Transverse colon (tissue), 4 donors: ENCODE measurements at regions of chr16 and their contacts with region 1.

Region 1: GRCh38 chr16:73166441-73166851 is 118.5 kb upstream of the ZFHX3 start:
- DNase-seq: no peak
- H3K4me3 ChIP-seq: peak overlapping the region in 1 of 4 donors; percentile 15
- H3K27ac ChIP-seq: peak overlapping the region; percentile 24 to 59 (median 43)
- H3K4me1 ChIP-seq: peaks cover 0 to 18% (median 10%) of the 10 kb centered on the region in 4 donors
- H3K27me3 ChIP-seq: no peaks in the 10 kb centered on the region
- CTCF ChIP-seq: no peak
- EP300 ChIP-seq: no peak
- POLR2A ChIP-seq: no peak

Region 2: DNA sequence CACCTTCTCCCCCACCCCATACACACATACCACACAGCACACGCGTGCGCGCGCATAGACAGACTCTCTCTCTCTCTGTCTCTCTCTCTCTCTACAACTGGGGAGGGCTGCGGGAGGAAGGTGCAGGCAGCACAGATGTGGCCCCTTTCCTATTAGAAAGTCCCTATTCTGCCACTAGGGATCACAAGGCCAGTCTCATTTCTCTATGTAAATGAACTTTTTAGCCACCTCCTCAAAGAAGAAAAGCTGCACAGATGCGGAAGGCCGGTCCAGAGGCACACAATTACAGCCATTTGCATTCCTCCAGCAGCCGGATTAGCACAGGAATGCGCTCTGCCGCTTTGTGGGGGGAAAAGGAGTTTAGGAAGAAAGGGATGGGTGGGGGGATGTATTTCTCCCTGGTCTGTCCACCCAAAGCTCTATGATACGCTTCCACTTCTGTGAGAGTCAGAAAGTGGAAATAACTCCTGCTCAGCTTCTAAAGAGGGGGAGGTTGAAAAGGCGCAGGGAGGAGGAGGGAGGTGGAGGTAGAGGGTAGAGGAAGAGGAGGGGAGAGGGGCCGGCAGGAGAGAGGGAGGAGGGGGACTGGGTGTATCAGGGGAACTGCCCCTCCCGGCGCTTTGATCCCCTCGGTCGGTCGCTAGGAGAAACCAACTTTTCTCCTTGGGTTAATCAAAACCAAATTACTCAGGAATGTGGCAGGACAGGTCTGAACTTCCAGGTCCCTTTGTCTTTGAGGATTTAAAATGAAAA is 130.2 kb before region 1 on chr16:
- in situ Hi-C with region 1: no loop called
- intact Hi-C with region 1: no loop called
- DNase-seq: no peak
- H3K4me3 ChIP-seq: no peak overlapping the region
- H3K27ac ChIP-seq: peak overlapping the region; percentile 23 to 69 (median 39)
- H3K4me1 ChIP-seq: peaks cover 17 to 55% (median 30%) of the 10 kb centered on the region in 4 donors
- H3K27me3 ChIP-seq: no peaks in the 10 kb centered on the region
- CTCF ChIP-seq: no peak
- EP300 ChIP-seq: no peak
- POLR2A ChIP-seq: no peak

Region 3: DNA sequence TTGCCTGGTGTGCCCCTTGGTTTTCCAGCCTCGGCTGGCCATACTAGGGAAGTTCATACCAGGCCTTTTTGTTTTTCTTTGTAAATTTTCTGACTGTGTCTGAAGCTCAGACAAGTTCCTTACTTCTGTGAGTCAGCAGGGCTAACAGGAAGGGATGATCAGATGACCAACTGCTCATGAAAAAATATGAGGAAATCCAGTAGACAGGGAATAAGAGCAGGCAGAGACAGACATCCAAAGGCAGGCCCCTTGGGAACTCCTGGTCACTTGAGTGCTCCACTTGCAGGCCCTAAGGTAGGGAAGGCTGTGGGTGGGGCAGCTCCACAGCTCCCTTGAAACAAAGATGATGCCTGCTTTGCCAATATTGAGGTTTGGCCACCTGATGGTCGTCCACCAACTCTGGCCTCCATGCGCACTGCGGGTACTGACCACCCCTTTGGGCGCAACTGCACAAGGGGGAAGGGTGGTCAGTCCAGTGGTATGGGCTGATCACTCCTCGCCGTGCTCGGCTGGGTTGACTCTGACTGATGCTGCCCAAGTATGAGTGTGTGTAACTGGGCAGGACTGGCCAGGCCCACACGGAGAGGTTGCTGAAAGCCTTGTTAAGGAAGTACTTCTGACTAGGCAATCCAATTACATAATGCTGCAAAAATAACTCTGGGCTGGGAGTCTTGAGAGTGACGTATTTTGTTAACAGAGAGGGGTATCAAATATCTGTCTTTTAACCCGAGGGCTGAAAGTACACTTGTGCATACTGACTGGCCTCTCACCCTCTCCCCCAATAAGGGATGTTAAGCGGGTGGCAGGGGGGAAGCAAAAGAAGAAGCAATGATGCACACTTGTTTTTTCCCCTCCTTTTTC is 97.7 kb before region 1 on chr16:
- in situ Hi-C with region 1: loop called in 1 of 4 experiments (anchors 5 kb)
- intact Hi-C with region 1: loop called (anchors 10 kb)
- DNase-seq: peak; percentile 57
- H3K4me3 ChIP-seq: no peak overlapping the region
- H3K27ac ChIP-seq: peak overlapping the region; percentile 69 to 91 (median 78)
- H3K4me1 ChIP-seq: peaks cover 33 to 82% (median 60%) of the 10 kb centered on the region in 4 donors
- H3K27me3 ChIP-seq: peaks cover 32% of the 10 kb centered on the region
- CTCF ChIP-seq: no peak
- EP300 ChIP-seq: no peak
- POLR2A ChIP-seq: peak; percentile 11